ENCODE measurements at regions of chr5 and their contacts with region 1.

Region 1: DNA sequence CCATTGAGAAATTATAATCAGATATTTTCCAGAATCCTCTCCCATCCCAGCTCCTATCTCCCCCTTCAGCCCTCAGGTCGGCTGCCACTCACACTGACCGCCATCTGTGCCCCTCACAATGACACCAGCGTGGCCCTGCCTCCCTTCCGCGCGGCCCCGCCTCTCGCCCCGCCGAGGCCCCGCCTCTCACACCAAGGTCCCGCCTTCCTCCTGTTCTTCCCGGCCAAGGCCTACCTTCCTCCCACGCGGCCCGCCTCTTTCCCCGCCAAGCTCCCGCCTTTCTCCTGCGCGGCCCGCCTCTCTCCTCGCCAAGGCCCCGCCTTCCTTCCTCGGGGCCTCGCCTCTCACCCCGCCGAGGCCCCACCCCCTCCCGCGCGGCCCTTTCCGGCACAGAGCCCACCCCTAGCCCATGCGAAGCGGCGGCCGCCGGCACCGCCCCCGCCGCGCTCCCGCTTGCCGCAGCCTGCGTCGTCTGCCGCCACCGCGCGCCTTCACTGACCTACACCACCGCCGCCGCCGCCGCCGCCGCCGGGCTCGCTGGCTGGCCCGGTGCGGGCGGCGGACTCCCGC is at the start of gene DNAJC21:
- DNase-seq: peak; percentile 98
- ATAC-seq: peak; percentile 88
- H3K4me3 Mint-ChIP-seq: peak within 1 kb of the TSS; percentile 97
- H3K27ac Mint-ChIP-seq: peak within 1 kb of the TSS; percentile 93
- H3K4me1 Mint-ChIP-seq: peaks cover 29% of the 10 kb centered on the region
- H3K27me3 Mint-ChIP-seq: no peaks in the 10 kb centered on the region
- CTCF ChIP-seq: no peak
- total RNA-seq, gene DNAJC21: 44.0 and 48.0 TPM in 2 replicates

Region 2: GRCh38 chr5:33440482-33441240 is 1488.6 kb before region 1 on chr5 and contains the start of gene TARS1:
- CTCF ChIA-PET with region 1: no interaction called
- POLR2A ChIA-PET with region 1: interaction called, 3 read pairs
- intact Hi-C with region 1: loop called (anchors 1 kb)
- DNase-seq: peak; percentile 89
- ATAC-seq: peak; percentile 95
- H3K4me3 Mint-ChIP-seq: no peak within 1 kb of the TSS
- H3K27ac Mint-ChIP-seq: no peak within 1 kb of the TSS
- H3K4me1 Mint-ChIP-seq: peaks cover 21% of the 10 kb centered on the region
- H3K27me3 Mint-ChIP-seq: no peaks in the 10 kb centered on the region
- CTCF ChIP-seq: no peak
- total RNA-seq, gene TARS1: 176 and 180 TPM in 2 replicates

Region 3: GRCh38 chr5:34499001-34499734 is 430.1 kb before region 1 on chr5:
- CTCF ChIA-PET with region 1: no interaction called
- POLR2A ChIA-PET with region 1: interaction called, 10 read pairs
- intact Hi-C with region 1: no loop called
- DNase-seq: no peak
- ATAC-seq: peak; percentile 87
- H3K4me3 Mint-ChIP-seq: peak overlapping the region; percentile 48
- H3K27ac Mint-ChIP-seq: peak overlapping the region; percentile 79
- H3K4me1 Mint-ChIP-seq: peaks cover 21% of the 10 kb centered on the region
- H3K27me3 Mint-ChIP-seq: peaks cover 4% of the 10 kb centered on the region
- CTCF ChIP-seq: no peak

Region 4: GRCh38 chr5:34756781-34757624 is 172.2 kb before region 1 on chr5:
- CTCF ChIA-PET with region 1: no interaction called
- POLR2A ChIA-PET with region 1: no interaction called
- intact Hi-C with region 1: no loop called
- DNase-seq: no peak
- ATAC-seq: no peak
- H3K4me3 Mint-ChIP-seq: no peak overlapping the region
- H3K27ac Mint-ChIP-seq: no peak overlapping the region
- H3K4me1 Mint-ChIP-seq: no peaks in the 10 kb centered on the region
- H3K27me3 Mint-ChIP-seq: no peaks in the 10 kb centered on the region
- CTCF ChIP-seq: no peak

Region 5: DNA sequence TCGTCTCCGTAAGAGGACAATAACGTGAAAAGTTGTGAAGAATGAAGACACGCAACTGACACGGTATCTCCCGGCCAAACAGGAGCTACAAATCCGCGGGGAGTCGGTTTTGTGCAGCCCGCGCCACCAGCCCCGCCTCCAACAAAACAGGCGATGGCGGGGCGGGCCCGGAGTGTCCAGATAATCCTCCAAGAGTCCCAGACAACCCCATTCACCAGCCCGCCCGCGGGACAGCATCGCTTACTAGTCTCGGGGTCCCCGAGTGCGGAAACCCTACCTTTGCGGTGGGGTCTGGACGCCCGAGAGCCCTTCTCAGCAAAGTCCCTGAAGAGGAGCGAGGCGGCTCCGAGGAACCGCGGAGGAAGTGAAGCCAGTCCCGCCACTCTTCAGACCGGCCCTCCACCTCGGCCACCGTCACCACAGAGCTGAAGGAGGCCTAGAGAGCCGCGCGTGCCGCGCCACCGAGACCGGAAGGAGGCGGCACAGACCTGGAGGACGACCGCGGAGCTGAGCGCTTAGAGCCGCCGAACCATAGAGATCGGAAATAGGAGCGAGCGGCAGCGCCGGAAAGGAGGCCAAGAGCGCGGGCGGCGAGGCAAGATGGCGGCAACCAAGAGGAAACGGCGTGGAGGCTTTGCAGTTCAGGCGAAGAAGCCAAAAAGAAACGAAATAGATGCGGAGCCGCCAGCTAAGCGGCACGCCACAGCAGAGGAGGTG is 13.9 kb before region 1 on chr5 and contains the starts of genes BRIX1 and RAD1:
- CTCF ChIA-PET with region 1: interaction called, 15 read pairs
- POLR2A ChIA-PET with region 1: interaction called, 125 read pairs
- intact Hi-C with region 1: loop called (anchors 1 kb)
- DNase-seq: peak; percentile 92
- ATAC-seq: peak; percentile 98
- H3K4me3 Mint-ChIP-seq: peak within 1 kb of the TSS; percentile 57
- H3K27ac Mint-ChIP-seq: no peak within 1 kb of the TSS
- H3K4me1 Mint-ChIP-seq: peaks cover 34% of the 10 kb centered on the region
- H3K27me3 Mint-ChIP-seq: no peaks in the 10 kb centered on the region
- CTCF ChIP-seq: no peak
- total RNA-seq, gene BRIX1: 40.6 and 42.4 TPM in 2 replicates
- total RNA-seq, gene RAD1: 20.2 and 24.4 TPM in 2 replicates

Region 6: GRCh38 chr5:35319333-35320002 is 390.2 kb after region 1 on chr5:
- CTCF ChIA-PET with region 1: no interaction called
- POLR2A ChIA-PET with region 1: interaction called, 7 read pairs
- intact Hi-C with region 1: loop called (anchors 10 kb)
- DNase-seq: peak; percentile 44
- ATAC-seq: peak; percentile 96
- H3K4me3 Mint-ChIP-seq: peak overlapping the region; percentile 64
- H3K27ac Mint-ChIP-seq: peak overlapping the region; percentile 87
- H3K4me1 Mint-ChIP-seq: peaks cover 16% of the 10 kb centered on the region
- H3K27me3 Mint-ChIP-seq: no peaks in the 10 kb centered on the region
- CTCF ChIP-seq: no peak

Region 7: GRCh38 chr5:36241631-36242533 is 1312.6 kb after region 1 on chr5 and contains the start of gene NADK2:
- CTCF ChIA-PET with region 1: no interaction called
- POLR2A ChIA-PET with region 1: interaction called, 10 read pairs
- intact Hi-C with region 1: loop called (anchors 1 kb)
- DNase-seq: peak; percentile 87
- ATAC-seq: peak; percentile 87
- H3K4me3 Mint-ChIP-seq: peak within 1 kb of the TSS; percentile 91
- H3K27ac Mint-ChIP-seq: peak within 1 kb of the TSS; percentile 95
- H3K4me1 Mint-ChIP-seq: peaks cover 49% of the 10 kb centered on the region
- H3K27me3 Mint-ChIP-seq: no peaks in the 10 kb centered on the region
- CTCF ChIP-seq: no peak
- total RNA-seq, gene NADK2: 13.3 and 18.2 TPM in 2 replicates

Region 8: GRCh38 chr5:36875790-36876388 is 1946.7 kb after region 1 on chr5:
- CTCF ChIA-PET with region 1: no interaction called
- POLR2A ChIA-PET with region 1: no interaction called
- intact Hi-C with region 1: loop called (anchors 5 kb)
- DNase-seq: peak; percentile 75
- ATAC-seq: peak; percentile 69
- H3K4me3 Mint-ChIP-seq: peak overlapping the region; percentile 93
- H3K27ac Mint-ChIP-seq: peak overlapping the region; percentile 93
- H3K4me1 Mint-ChIP-seq: peaks cover 46% of the 10 kb centered on the region
- H3K27me3 Mint-ChIP-seq: no peaks in the 10 kb centered on the region
- CTCF ChIP-seq: no peak